ENCODE measurements at regions of chr20 and their contacts with region 1.

Region 1: DNA sequence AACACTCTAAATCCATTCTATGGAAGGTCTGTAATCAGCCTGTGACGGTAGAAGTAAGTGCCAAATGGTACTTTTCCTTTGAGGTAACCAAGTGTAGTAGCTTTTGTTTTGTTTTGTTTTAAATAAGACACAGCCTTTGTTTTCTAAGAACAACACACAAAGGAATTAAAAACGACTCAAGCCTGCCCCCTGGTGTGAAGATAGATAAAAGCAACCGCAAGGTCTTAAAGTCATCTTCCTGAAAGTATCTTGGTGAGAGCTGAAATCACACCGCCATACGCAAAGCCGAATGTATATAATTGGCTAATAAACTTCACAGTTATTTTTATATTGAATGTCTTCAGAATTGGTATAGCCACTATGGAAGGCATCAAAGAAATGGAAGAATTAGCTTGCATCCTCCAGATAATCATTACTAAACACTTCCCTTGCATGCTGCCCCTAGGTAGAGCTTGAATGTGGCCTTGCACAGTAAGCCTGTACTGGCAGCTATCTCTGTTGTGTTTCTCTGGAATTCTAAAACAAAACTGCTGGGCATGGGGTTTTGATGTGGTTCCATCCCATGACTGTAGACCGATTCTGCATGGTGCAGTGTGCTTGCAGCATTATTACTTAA is 95.6 kb downstream of the LAMP5 start:
- DNase-seq: peak; percentile 61
- ATAC-seq: peak; percentile 75
- H3K4me3 ChIP-seq: no peak overlapping the region
- H3K27ac ChIP-seq: no peak overlapping the region
- H3K4me1 ChIP-seq: peaks cover 3% of the 10 kb centered on the region; the same call in 1 of the 2 replicates
- H3K27me3 ChIP-seq: no peaks in the 10 kb centered on the region
- CTCF ChIP-seq: peak; percentile 41 to 69 (median 51); a peak in 5 of 6 replicates
- EP300 ChIP-seq: no peak
- POLR2A ChIP-seq: no peak
- RAD21 ChIP-seq: peak; percentile 74

Region 2: DNA sequence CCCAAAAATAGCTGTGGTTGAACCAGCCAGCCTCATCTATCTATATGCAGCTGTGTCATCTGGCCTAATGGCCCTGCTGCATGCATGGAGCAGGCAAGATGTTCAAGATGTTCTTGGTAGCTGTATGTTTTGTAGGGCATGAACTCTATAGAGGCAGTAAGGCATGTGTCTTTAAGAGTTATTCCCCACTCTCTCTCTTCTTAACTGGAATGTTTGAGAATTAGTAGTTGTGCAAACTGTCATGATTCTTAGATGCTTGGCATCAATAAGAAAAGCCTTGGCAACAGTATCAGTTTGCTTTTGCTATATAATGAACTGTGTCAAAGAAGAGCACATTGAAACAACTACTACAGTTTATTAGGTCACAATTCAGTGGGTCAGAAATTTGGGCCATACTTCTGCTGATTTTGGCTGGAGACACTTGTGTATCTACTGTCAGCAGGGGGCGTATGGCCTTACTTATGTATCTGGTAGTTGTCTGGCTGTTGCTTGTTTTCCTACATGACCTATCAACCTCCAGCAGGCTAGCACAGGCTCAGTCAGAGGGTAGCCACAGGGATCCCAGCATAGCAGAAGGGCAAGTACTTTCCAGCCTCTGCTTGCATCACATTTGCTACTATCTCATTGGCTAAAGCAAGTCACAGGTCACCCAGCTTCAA is 151.7 kb before region 1 on chr20:
- CTCF ChIA-PET with region 1: interaction called, 20 read pairs
- POLR2A ChIA-PET with region 1: no interaction called
- RAD21 ChIA-PET with region 1: interaction called, 3 read pairs
- SMC1A ChIA-PET with region 1: interaction called, 3 read pairs
- in situ Hi-C with region 1: loop called (anchors 5 kb)
- intact Hi-C with region 1: no loop called
- DNase-seq: peak; percentile 34
- ATAC-seq: peak; percentile 45
- H3K4me3 ChIP-seq: no peak overlapping the region
- H3K27ac ChIP-seq: no peak overlapping the region
- H3K4me1 ChIP-seq: peaks cover 13% of the 10 kb centered on the region
- H3K27me3 ChIP-seq: no peaks in the 10 kb centered on the region
- CTCF ChIP-seq: peak; percentile 5 to 37 (median 32); a peak in 2 of 6 replicates
- EP300 ChIP-seq: no peak
- POLR2A ChIP-seq: no peak
- RAD21 ChIP-seq: no peak

Region 3: DNA sequence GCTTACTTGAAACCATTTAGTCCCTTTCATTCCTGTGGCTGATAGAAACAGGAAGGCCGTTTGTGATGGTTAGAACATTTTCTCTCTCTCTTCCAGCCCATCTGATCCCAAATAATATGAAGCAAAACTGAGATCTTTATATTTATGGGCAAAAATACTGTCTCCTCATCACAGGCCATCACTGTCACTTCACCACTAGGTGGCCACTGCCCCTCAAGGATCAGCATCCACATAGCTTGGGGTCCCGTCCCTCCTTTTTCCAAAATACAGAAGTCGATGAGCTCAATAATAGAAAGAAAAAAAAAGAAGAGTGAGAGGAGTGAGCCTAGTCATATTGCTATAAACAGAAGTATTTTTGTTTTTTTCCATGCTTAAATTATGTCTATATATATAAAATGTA is 142.0 kb before region 1 on chr20:
- CTCF ChIA-PET with region 1: interaction called, 3 read pairs
- POLR2A ChIA-PET with region 1: no interaction called
- RAD21 ChIA-PET with region 1: no interaction called
- SMC1A ChIA-PET with region 1: no interaction called
- in situ Hi-C with region 1: no loop called
- intact Hi-C with region 1: loop called (anchors 1 kb)
- DNase-seq: no peak
- ATAC-seq: peak; percentile 56; the same call in 2 of the 3 replicates
- H3K4me3 ChIP-seq: no peak overlapping the region
- H3K27ac ChIP-seq: no peak overlapping the region
- H3K4me1 ChIP-seq: no peaks in the 10 kb centered on the region
- H3K27me3 ChIP-seq: no peaks in the 10 kb centered on the region
- CTCF ChIP-seq: peak; percentile 37 to 69 (median 68)
- EP300 ChIP-seq: no peak
- POLR2A ChIP-seq: no peak
- RAD21 ChIP-seq: peak; percentile 46

Region 4: GRCh38 chr20:9575836-9576235 is 34.2 kb before region 1 on chr20:
- CTCF ChIA-PET with region 1: no interaction called
- POLR2A ChIA-PET with region 1: no interaction called
- RAD21 ChIA-PET with region 1: no interaction called
- SMC1A ChIA-PET with region 1: no interaction called
- in situ Hi-C with region 1: no loop called
- intact Hi-C with region 1: no loop called
- DNase-seq: no peak
- ATAC-seq: no peak
- H3K4me3 ChIP-seq: no peak overlapping the region
- H3K27ac ChIP-seq: no peak overlapping the region
- H3K4me1 ChIP-seq: no peaks in the 10 kb centered on the region; the same call in 1 of the 2 replicates
- H3K27me3 ChIP-seq: no peaks in the 10 kb centered on the region; a peak in 1 of 4 replicates
- CTCF ChIP-seq: no peak
- EP300 ChIP-seq: no peak
- POLR2A ChIP-seq: no peak
- RAD21 ChIP-seq: no peak

Measured in GM12878 (cell line).